ENCODE measurements at regions of chr19 and their contacts with region 1.

Region 1: DNA sequence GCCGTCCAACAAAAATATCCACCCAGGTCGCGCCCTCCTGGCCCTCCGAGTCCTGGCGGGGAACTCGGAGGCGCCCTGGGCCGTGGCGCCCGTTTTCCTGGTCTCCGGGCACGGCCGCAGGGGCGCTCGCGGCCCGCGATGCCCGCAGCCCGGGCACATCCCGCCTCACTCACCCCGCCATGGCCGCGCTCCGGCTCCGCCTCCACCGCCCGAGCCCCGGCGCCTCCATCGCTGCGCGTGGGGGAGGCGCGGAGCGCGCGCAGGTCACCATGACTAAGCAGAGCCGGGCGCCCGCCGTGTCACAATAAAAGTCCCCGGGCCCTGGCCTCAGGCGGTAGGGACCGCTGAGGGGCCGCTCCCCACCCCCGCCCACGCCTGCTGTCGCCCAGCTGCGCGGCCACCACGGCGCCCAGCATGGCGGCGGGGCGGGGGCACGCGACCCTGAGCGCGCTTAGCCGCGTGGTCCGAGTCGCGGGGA is 593 bp downstream of the KEAP1 start:
- DNase-seq: peak; percentile 93
- H3K4me3 Mint-ChIP-seq: peak overlapping the region; percentile 89
- H3K27ac Mint-ChIP-seq: peak overlapping the region; percentile 88
- H3K4me1 Mint-ChIP-seq: peaks cover 37% of the 10 kb centered on the region
- H3K27me3 Mint-ChIP-seq: no peaks in the 10 kb centered on the region

Region 2: GRCh38 chr19:10398819-10399218 is 103.7 kb before region 1 on chr19:
- CTCF ChIA-PET with region 1: no interaction called
- intact Hi-C with region 1: no loop called
- DNase-seq: no peak
- H3K4me3 Mint-ChIP-seq: no peak overlapping the region
- H3K27ac Mint-ChIP-seq: peak overlapping the region; percentile 30
- H3K4me1 Mint-ChIP-seq: peaks cover 33% of the 10 kb centered on the region
- H3K27me3 Mint-ChIP-seq: no peaks in the 10 kb centered on the region

Region 3: DNA sequence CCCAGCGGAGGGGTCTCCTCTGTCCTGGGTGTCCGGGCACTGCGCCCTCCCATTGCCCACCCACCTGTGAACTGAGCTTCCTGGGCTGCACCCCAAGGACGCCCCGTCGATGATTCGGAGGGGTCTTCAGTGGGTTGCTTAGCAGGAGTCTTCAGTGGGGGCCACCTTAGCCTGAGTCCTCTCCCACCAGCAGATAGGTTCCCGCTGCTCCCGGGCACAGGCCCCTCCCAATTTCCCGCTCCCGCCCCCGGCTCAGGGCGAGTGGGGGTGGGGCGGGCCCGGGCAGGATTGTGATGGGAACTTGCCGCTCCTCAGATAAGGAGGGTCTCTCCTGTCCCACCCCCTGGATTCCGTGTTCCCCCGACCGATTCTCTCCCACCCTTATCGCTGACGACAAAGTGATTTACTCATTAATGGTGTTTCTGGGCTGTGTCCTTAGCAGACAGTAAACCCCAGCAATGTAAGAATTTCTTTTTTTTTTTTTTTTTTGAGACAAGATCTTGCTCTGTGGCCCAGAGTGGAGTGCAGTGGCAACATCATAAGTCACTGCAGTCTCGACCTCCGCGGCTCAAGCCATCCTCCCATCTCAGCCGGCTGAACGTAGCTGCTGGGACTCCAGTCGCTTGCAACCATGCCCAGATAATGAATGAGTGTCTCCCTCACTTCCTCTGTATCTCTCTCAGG is 15.3 kb after region 1 on chr19:
- CTCF ChIA-PET with region 1: interaction called, 16 read pairs
- intact Hi-C with region 1: no loop called
- DNase-seq: no peak
- H3K4me3 Mint-ChIP-seq: peak overlapping the region; percentile 42
- H3K27ac Mint-ChIP-seq: no peak overlapping the region
- H3K4me1 Mint-ChIP-seq: peaks cover 24% of the 10 kb centered on the region
- H3K27me3 Mint-ChIP-seq: peaks cover 60% of the 10 kb centered on the region

Region 4: DNA sequence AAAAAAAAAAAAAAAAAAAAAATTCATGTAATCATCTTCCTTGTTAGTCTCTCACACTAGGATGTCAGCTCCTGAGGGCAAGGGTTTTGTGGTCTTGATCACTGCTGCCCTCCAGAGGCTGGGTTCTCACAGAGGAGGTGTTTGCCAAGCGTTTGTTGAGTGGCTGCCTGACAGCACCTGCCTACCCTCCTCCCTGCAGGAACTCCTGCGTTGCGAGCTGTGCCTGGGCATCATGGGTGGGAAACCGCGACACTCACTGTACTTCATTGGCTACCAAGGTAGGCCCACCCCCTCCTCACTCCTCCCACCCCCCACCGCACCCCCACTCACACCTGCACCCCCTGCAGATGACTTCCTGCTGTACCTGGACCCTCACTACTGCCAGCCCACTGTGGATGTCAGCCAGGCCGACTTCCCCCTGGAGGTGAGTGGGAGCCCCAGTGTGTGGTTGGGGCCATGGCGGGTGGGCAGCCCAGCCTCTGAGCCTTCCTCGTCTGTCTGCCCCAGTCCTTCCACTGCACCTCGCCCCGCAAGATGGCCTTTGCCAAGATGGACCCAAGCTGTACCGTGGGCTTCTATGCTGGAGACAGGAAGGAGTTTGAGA is 49.2 kb after region 1 on chr19:
- CTCF ChIA-PET with region 1: interaction called, 7 read pairs
- intact Hi-C with region 1: loop called (anchors 5 kb)
- DNase-seq: peak; percentile 77
- H3K4me3 Mint-ChIP-seq: no peak overlapping the region
- H3K27ac Mint-ChIP-seq: peak overlapping the region; percentile 46
- H3K4me1 Mint-ChIP-seq: peaks cover 45% of the 10 kb centered on the region
- H3K27me3 Mint-ChIP-seq: no peaks in the 10 kb centered on the region

Region 5: DNA sequence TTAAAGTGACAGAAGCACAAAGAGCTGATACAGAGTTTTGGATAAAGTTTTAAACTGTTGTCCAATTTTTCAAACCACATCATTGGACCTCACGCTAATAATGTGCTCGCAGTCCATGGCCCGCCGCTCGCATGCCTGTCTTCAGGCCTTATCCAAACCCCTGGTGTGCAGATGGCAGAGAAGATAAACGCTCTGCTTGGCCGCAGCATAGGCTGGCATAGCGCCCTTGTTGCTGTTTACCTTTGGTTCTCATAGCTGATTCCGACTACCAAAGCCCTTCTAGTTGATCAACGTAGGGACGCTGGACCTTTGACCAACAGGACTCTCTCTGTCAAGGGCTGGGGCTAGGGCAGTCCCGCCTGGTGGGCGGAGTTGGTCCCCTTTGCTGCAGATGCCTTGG is 175.2 kb after region 1 on chr19:
- CTCF ChIA-PET with region 1: no interaction called
- intact Hi-C with region 1: no loop called
- DNase-seq: no peak
- H3K4me3 Mint-ChIP-seq: no peak overlapping the region
- H3K27ac Mint-ChIP-seq: no peak overlapping the region
- H3K4me1 Mint-ChIP-seq: no peaks in the 10 kb centered on the region
- H3K27me3 Mint-ChIP-seq: no peaks in the 10 kb centered on the region

Region 6: GRCh38 chr19:10780368-10780767 is 277.8 kb after region 1 on chr19:
- CTCF ChIA-PET with region 1: no interaction called
- intact Hi-C with region 1: no loop called
- DNase-seq: no peak
- H3K4me3 Mint-ChIP-seq: no peak overlapping the region
- H3K27ac Mint-ChIP-seq: no peak overlapping the region
- H3K4me1 Mint-ChIP-seq: no peaks in the 10 kb centered on the region
- H3K27me3 Mint-ChIP-seq: no peaks in the 10 kb centered on the region